ENCODE measurements at regions of chr17 and their contacts with region 1.

Region 1: DNA sequence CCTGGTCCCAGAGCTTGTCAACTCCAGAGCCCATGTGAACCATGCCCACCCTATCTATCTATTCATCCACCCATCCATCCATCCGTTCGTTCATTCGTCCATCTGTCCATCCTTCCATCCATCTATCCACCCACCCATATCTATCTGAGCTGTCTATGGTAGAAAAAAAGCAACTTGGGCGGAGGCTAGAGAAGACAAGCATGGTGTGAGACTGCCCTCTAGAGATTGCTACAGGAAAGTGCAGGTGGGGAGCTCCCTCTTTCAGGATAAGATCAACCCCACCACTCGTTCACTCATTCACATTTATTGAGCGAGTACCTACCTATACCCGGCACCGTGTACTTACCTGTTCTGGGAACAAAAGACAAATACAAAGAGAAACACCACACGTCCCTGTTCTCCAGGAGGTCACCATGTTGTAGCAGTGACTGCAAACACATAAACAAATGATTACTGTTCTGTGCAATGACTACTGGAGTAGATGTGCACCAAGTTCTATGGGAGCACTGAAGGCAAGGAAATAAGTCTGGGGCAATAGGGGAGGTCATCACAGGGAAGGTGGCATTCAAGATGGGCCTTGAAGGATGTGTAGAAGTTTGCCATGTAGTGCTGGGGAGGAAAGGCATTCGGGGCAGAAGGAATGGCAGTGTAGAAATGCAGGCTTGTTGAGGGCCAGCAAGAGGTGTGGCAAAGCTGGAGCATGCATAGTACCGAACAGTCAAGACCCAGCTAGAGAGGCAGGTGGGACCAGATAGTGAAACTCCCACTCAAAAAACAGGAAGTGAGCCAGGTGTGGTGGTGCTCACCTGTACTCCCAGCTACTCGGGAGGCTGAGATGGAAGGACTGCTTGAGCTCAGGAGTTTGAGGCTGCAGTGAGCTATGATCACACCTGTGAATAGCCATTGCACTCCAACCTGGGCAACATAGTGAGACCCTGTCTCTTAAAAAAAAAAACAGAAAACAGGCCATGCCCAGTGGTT is 13.4 kb upstream of the ATP5MC1 start:
- DNase-seq: peak; percentile 71
- ATAC-seq: peak; percentile 81
- H3K4me3 Mint-ChIP-seq: no peak overlapping the region
- H3K27ac Mint-ChIP-seq: no peak overlapping the region
- H3K4me1 Mint-ChIP-seq: peaks cover 27% of the 10 kb centered on the region
- H3K27me3 Mint-ChIP-seq: peaks cover 3% of the 10 kb centered on the region

Region 2: GRCh38 chr17:48724251-48725003 is 154.8 kb before region 1 on chr17:
- CTCF ChIA-PET with region 1: interaction called, 56 read pairs
- DNase-seq: peak; percentile 87
- ATAC-seq: peak; percentile 75
- H3K4me3 Mint-ChIP-seq: peak overlapping the region; percentile 12
- H3K27ac Mint-ChIP-seq: peak overlapping the region; percentile 77
- H3K4me1 Mint-ChIP-seq: peaks cover 25% of the 10 kb centered on the region
- H3K27me3 Mint-ChIP-seq: peaks cover 96% of the 10 kb centered on the region

Region 3: GRCh38 chr17:48816774-48817590 is 62.2 kb before region 1 on chr17 and contains the start of gene TTLL6:
- CTCF ChIA-PET with region 1: interaction called, 714 read pairs
- DNase-seq: peak; percentile 84
- ATAC-seq: peak; percentile 98
- H3K4me3 Mint-ChIP-seq: peak within 1 kb of the TSS; percentile 61
- H3K27ac Mint-ChIP-seq: no peak within 1 kb of the TSS
- H3K4me1 Mint-ChIP-seq: peaks cover 24% of the 10 kb centered on the region
- H3K27me3 Mint-ChIP-seq: peaks cover 62% of the 10 kb centered on the region
- total RNA-seq, gene TTLL6: not detected

Region 4: GRCh38 chr17:48836004-48836403 is 43.2 kb before region 1 on chr17:
- CTCF ChIA-PET with region 1: interaction called, 21 read pairs
- DNase-seq: no peak
- ATAC-seq: no peak
- H3K4me3 Mint-ChIP-seq: peak overlapping the region; percentile 6
- H3K27ac Mint-ChIP-seq: peak overlapping the region; percentile 61
- H3K4me1 Mint-ChIP-seq: peaks cover 92% of the 10 kb centered on the region
- H3K27me3 Mint-ChIP-seq: no peaks in the 10 kb centered on the region

Region 5: DNA sequence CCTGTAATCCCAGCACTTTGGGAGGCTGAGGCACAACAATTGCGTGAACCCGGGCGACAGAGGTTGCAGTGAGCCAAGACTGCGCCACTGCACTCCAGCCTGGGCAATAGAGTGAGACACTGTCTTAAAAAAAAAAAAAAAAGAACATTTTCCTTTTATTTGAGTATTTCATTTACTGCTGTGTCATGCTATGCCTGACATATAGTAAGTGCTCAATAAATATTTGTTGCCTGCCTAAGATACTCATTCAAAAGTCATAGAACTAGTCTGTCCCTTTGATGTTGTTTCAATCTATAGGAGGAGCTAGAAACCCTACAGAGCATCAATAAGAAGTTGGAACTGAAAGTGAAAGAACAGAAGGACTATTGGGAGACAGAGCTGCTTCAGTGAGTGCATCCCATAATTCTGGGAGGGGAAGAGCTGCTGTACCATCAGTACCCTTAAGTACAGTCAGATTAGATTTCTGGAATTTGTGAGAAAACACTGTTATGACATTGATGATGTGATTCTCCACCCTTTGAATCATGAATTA is 28.4 kb before region 1 on chr17:
- CTCF ChIA-PET with region 1: interaction called, 27 read pairs
- DNase-seq: no peak
- ATAC-seq: peak; percentile 85
- H3K4me3 Mint-ChIP-seq: peak overlapping the region; percentile 5
- H3K27ac Mint-ChIP-seq: peak overlapping the region; percentile 76
- H3K4me1 Mint-ChIP-seq: peaks cover 19% of the 10 kb centered on the region
- H3K27me3 Mint-ChIP-seq: no peaks in the 10 kb centered on the region

Region 6: GRCh38 chr17:48915459-48916282 is 36.5 kb after region 1 on chr17:
- CTCF ChIA-PET with region 1: interaction called, 12 read pairs
- DNase-seq: peak; percentile 68
- ATAC-seq: peak; percentile 96
- H3K4me3 Mint-ChIP-seq: peak overlapping the region; percentile 75
- H3K27ac Mint-ChIP-seq: peak overlapping the region; percentile 95
- H3K4me1 Mint-ChIP-seq: peaks cover 56% of the 10 kb centered on the region
- H3K27me3 Mint-ChIP-seq: no peaks in the 10 kb centered on the region